Activated CD8-positive, alpha-beta T cell treated with anti-CD3 and anti-CD28 coated beads, Interleukin-2, amount 10 ng/mL, durations not matched to agents 7 days and 5 days (primary cell): ENCODE measurements at regions of chr1 and their contacts with region 1.

Region 1: GRCh38 chr1:24526940-24527542 is 24.4 kb downstream of the RCAN3 start:
- DNase-seq: peak; percentile 63
- ATAC-seq: peak; percentile 47
- H3K4me3 Mint-ChIP-seq: no peak overlapping the region
- H3K27ac Mint-ChIP-seq: no peak overlapping the region
- H3K4me1 Mint-ChIP-seq: peaks cover 21% of the 10 kb centered on the region
- H3K27me3 Mint-ChIP-seq: no peaks in the 10 kb centered on the region

Region 2: GRCh38 chr1:24409535-24409934 is 117.5 kb before region 1 on chr1:
- CTCF ChIA-PET with region 1: interaction called, 159 read pairs
- POLR2A ChIA-PET with region 1: no interaction called
- DNase-seq: no peak
- ATAC-seq: no peak
- H3K4me3 Mint-ChIP-seq: no peak overlapping the region
- H3K27ac Mint-ChIP-seq: no peak overlapping the region
- H3K4me1 Mint-ChIP-seq: peaks cover 24% of the 10 kb centered on the region
- H3K27me3 Mint-ChIP-seq: no peaks in the 10 kb centered on the region

Region 3: GRCh38 chr1:24481101-24481500 is 45.9 kb before region 1 on chr1:
- CTCF ChIA-PET with region 1: interaction called, 24 read pairs
- POLR2A ChIA-PET with region 1: interaction called, 4 read pairs
- DNase-seq: peak; percentile 70
- ATAC-seq: peak; percentile 78
- H3K4me3 Mint-ChIP-seq: peak overlapping the region; percentile 54
- H3K27ac Mint-ChIP-seq: peak overlapping the region; percentile 97
- H3K4me1 Mint-ChIP-seq: peaks cover 56% of the 10 kb centered on the region
- H3K27me3 Mint-ChIP-seq: no peaks in the 10 kb centered on the region

Region 4: GRCh38 chr1:24486331-24487065 is 40.5 kb before region 1 on chr1:
- CTCF ChIA-PET with region 1: interaction called, 24 read pairs
- POLR2A ChIA-PET with region 1: interaction called, 4 read pairs
- DNase-seq: peak; percentile 76
- ATAC-seq: peak; percentile 64
- H3K4me3 Mint-ChIP-seq: peak overlapping the region; percentile 51
- H3K27ac Mint-ChIP-seq: peak overlapping the region; percentile 92
- H3K4me1 Mint-ChIP-seq: peaks cover 72% of the 10 kb centered on the region
- H3K27me3 Mint-ChIP-seq: no peaks in the 10 kb centered on the region

Region 5: DNA sequence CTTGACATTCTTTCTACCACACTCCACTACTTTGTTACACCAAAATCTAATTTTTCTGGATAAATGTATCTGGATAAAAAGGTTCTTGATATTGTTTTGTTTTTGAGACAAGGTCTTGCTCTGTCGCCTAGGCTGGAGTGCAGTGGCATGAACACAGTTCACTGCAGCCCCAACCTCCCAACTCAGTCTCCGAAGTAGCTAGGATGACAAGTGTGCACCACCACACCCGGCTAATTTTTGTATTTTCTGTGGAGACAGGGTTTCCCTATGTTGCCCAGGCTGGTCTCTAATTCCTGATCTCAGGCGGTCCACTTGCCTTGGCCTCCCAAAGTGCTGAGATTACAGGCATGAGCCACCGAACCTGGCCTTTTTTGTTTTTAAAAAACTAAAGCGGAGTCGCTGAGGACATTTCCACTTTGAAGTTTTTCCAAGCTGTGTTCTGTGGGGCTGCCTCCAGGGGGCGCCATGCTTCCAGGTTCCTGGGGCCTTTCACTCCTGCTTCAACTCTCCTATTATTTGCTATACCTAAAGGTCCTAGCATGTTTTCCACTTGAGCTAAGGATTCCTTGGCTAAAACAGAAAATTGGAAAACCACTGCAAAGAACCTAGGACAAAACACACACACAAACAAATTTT is 14.8 kb after region 1 on chr1:
- CTCF ChIA-PET with region 1: interaction called, 19 read pairs
- POLR2A ChIA-PET with region 1: interaction called, 3 read pairs
- DNase-seq: peak; percentile 50
- ATAC-seq: no peak
- H3K4me3 Mint-ChIP-seq: no peak overlapping the region
- H3K27ac Mint-ChIP-seq: no peak overlapping the region
- H3K4me1 Mint-ChIP-seq: peaks cover 60% of the 10 kb centered on the region
- H3K27me3 Mint-ChIP-seq: no peaks in the 10 kb centered on the region

Region 6: GRCh38 chr1:24805534-24806301 is 278.7 kb after region 1 on chr1:
- CTCF ChIA-PET with region 1: no interaction called
- POLR2A ChIA-PET with region 1: no interaction called
- DNase-seq: no peak
- ATAC-seq: no peak
- H3K4me3 Mint-ChIP-seq: no peak overlapping the region
- H3K27ac Mint-ChIP-seq: no peak overlapping the region
- H3K4me1 Mint-ChIP-seq: peaks cover 2% of the 10 kb centered on the region
- H3K27me3 Mint-ChIP-seq: peaks cover 3% of the 10 kb centered on the region